Dorsolateral prefrontal cortex (tissue), 120 donors: ENCODE measurements at regions of chr1 and their contacts with region 1.

Region 1: DNA sequence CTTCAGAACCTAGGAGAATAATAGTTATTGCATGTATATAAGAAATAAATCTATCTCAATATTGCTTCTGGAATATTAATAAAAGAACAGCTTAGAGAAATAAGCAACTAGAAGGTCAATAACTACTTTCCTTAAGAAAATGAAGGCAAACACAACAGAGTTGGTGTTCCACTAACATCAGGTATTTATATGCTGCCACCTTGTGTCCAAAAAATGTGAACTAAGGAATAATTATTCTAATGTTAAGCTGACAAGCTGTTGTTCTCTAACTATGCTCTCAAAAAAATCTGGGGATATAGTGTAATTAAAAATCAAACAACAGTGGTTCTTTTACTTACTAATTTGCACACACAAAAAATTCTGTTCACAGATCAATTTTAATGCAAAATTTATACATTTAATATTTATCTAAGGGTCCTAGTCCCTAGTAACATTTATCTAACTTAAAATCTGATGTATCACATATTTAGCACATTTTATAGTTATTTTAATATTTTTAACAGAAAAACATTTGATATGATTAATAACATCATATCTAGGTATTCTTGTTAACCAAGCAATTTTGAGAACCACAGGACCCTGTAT is 39.6 kb downstream of the UCHL5 start:
- DNase-seq: no peak
- H3K4me3 ChIP-seq: no peak overlapping the region
- H3K27ac ChIP-seq: no peak overlapping the region
- H3K27me3 ChIP-seq: no peaks in the 10 kb centered on the region
- CTCF ChIP-seq: peak; percentile 47 to 84 (median 66)

Region 2: GRCh38 chr1:192801451-192801850 is 218.1 kb before region 1 on chr1:
- intact Hi-C with region 1: loop called (anchors 2 to 5 kb)
- DNase-seq: no peak
- H3K4me3 ChIP-seq: no peak overlapping the region
- H3K27ac ChIP-seq: no peak overlapping the region
- H3K27me3 ChIP-seq: no peaks in the 10 kb centered on the region
- CTCF ChIP-seq: no peak

Region 3: DNA sequence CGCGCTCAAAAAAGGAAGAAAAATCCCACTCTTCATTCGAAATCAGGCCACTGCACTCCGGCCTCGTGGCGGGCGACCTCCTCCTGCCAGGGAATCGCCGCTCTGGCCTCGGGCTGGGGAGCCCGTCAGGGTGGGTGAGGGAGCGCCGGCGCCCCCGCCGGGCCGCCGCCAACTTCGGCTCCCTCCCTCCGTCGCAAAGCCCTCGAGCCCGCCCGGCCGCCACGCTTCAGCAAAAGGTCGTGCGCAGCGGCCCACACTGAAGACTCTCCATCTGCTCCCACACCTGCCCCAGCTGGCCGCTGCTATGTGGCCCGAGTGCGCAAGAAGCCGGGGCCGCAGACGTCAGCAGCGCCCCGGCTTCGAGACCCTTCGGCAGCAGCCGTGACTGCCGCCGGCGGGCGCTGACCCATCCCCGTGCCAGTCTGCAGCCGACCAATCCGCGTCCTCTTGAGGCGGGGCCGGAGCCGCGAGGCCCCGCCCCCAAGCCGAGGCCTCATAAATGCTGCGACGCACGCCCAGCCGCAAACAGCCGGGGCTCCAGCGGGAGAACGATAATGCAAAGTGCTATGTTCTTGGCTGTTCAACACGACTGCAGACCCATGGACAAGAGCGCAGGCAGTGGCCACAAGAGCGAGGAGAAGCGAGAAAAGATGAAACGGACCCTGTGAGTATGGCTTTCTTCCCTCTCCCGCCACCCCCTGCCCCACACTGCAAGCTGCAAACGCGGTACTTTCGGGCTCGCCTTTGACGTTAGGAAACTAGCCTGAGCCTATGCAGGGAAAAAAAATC is 210.8 kb before region 1 on chr1 and contains the start of gene RGS2:
- intact Hi-C with region 1: loop called (anchors 2 to 5 kb)
- DNase-seq: peak; percentile 87 to 97 (median 95)
- H3K4me3 ChIP-seq: peak within 1 kb of the TSS; percentile 64 to 96 (median 81)
- H3K27ac ChIP-seq: peak within 1 kb of the TSS; percentile 72 to 98 (median 92)
- H3K27me3 ChIP-seq: no peaks in the 10 kb centered on the region
- CTCF ChIP-seq: peak in 43 of 56 donors; percentile 7 to 70 (median 45)
- total RNA-seq, gene RGS2: 11.3 to 144 (median 30.8) TPM

Region 4: GRCh38 chr1:193201021-193201420 is 181.5 kb after region 1 on chr1:
- intact Hi-C with region 1: no loop called
- DNase-seq: no peak
- H3K4me3 ChIP-seq: no peak overlapping the region
- H3K27ac ChIP-seq: no peak overlapping the region
- H3K27me3 ChIP-seq: no peaks in the 10 kb centered on the region
- CTCF ChIP-seq: no peak